WTC11 (cell line): ENCODE measurements at regions of chr11 and their contacts with region 1.

Region 1: GRCh38 chr11:76686261-76687079 is 15.9 kb upstream of the LRRC32 start:
- DNase-seq: no peak
- ATAC-seq: peak; percentile 88
- H3K4me3 Mint-ChIP-seq: no peak overlapping the region
- H3K27ac Mint-ChIP-seq: no peak overlapping the region
- H3K4me1 Mint-ChIP-seq: peaks cover 11% of the 10 kb centered on the region
- H3K27me3 Mint-ChIP-seq: peaks cover 3% of the 10 kb centered on the region; the same call in 1 of the 2 replicates
- CTCF ChIP-seq: no peak

Region 2: DNA sequence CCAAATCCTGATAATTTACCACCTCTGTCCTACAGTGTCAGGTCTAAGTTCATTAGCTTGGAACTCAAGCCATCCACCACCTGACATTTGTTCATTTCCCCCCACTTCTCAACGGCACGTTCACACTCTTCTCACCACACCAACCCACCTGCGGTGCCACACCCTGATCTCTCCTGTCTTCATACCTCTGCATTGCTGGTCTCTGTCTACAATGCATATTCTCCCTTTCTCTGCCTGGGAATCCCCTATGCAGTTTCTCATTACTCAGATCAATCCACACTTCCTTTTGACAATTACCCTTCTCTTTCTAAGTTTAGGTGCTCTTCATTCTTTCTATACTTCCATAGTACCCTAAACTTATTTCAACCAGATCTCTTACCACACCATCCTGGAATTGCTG is 262.1 kb before region 1 on chr11:
- CTCF ChIA-PET with region 1: no interaction called
- POLR2A ChIA-PET with region 1: no interaction called
- DNase-seq: no peak
- ATAC-seq: no peak
- H3K4me3 Mint-ChIP-seq: no peak overlapping the region
- H3K27ac Mint-ChIP-seq: no peak overlapping the region
- H3K4me1 Mint-ChIP-seq: 0 out of 2 replicates have a peak, but pooled peaks cover 3% of the 10 kb centered on the region
- H3K27me3 Mint-ChIP-seq: no peaks in the 10 kb centered on the region; the same call in 1 of the 2 replicates
- CTCF ChIP-seq: no peak

Region 3: DNA sequence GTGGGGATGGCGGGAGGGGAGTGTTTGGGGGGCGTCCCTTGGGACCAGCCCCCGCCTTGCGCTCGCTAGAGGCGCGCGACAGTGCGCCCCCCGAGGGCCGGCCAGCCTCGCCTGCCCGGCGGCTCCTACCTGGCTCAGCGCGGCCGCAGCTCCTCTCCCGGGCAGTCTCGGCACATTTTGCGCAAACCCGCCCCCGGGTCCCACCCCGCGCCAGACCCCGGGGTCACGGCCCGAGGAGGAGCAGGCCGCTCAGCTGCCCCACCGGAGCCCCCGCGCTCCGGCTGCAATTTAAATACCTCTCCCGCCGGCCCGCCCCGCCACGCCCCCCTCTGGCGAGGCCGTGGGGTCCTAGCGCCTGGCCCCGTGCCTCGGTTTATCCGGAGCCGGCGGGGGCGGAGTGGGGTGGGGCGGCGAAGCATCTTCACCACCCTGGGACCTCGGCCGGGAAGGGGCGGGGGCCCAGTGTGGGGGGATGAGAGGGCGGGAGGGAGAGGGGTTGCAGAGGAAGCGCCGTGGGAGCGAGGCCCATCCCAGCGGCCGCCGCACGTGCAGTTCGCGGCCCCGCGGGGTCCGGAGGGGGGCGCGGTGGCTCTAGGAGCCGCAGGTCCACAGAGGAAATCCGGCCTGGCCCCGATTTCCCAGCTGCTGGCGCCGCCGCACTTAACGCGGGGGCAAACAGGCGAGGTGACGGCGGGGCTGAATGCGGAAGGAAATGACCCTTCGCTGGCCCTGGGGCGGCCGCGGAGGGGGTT is 15.8 kb before region 1 on chr11 and contains the start of gene LRRC32:
- CTCF ChIA-PET with region 1: interaction called, 12 read pairs
- POLR2A ChIA-PET with region 1: no interaction called
- DNase-seq: peak; percentile 57
- ATAC-seq: peak; percentile 31
- H3K4me3 Mint-ChIP-seq: peak within 1 kb of the TSS; percentile 66
- H3K27ac Mint-ChIP-seq: no peak within 1 kb of the TSS
- H3K4me1 Mint-ChIP-seq: peaks cover 22% of the 10 kb centered on the region
- H3K27me3 Mint-ChIP-seq: peaks cover 22% of the 10 kb centered on the region
- CTCF ChIP-seq: no peak
- total RNA-seq, gene LRRC32: 0.74 to 1.7 TPM (median 1.6 TPM) in 3 replicates

Region 4: DNA sequence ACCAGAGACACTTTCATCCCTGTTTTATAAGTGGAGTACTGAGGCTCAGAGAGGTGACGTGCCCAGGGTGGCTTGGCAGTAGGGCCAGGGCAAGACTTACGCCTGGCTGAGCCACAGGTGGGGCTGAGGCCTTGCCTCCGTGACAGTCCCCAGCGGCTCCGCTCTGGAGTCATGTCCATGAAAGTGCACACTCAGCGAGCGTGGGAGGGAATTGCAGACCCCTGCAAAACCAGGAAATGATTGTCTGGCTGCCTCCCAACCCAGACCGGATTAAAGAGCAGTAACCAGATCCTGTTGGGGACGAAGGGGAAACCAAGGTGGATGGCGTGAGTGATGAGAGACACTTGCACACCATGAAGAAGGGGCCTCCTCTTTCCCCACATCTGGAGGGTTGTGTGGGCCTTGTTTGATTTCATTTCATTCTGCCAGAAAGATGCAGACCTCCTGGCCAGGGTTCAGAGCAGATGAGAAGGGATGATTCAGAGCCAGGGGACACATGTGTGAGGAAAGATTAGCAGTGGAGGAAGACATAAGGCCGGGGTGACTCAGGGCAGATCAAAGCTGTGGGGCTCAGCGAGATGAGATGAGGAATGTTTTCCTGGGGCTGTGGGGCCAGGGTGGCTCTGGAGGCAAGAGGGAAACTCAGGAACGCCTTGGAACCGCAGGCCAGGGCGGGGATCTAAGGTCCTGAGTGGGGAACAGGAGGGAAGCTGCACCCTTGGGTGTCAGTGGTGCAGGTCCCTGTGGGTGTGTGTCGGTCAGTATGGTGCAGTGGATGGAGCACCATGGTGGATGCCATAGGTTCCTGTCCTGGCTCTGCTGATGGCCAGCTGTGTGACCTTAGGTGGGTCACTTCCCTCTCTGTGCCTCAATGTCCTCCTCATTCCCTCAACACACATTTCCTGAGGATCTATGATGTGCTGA is 14.0 kb after region 1 on chr11:
- CTCF ChIA-PET with region 1: interaction called, 23 read pairs
- POLR2A ChIA-PET with region 1: no interaction called
- DNase-seq: no peak
- ATAC-seq: no peak
- H3K4me3 Mint-ChIP-seq: no peak overlapping the region
- H3K27ac Mint-ChIP-seq: no peak overlapping the region
- H3K4me1 Mint-ChIP-seq: peaks cover 47% of the 10 kb centered on the region
- H3K27me3 Mint-ChIP-seq: no peaks in the 10 kb centered on the region
- CTCF ChIP-seq: no peak